GM12878 (cell line): ENCODE measurements at regions of chr2 and their contacts with region 1.

Region 1: GRCh38 chr2:205885492-205886099 is 200.4 kb downstream of the INO80D start:
- DNase-seq: no peak
- ATAC-seq: peak; percentile 89
- H3K4me3 ChIP-seq: no peak overlapping the region
- H3K27ac ChIP-seq: no peak overlapping the region
- H3K4me1 ChIP-seq: no peaks in the 10 kb centered on the region
- H3K27me3 ChIP-seq: no peaks in the 10 kb centered on the region
- CTCF ChIP-seq: peak; percentile 82 to 86 (median 85)
- EP300 ChIP-seq: no peak
- POLR2A ChIP-seq: no peak
- RAD21 ChIP-seq: peak; percentile 87

Region 2: DNA sequence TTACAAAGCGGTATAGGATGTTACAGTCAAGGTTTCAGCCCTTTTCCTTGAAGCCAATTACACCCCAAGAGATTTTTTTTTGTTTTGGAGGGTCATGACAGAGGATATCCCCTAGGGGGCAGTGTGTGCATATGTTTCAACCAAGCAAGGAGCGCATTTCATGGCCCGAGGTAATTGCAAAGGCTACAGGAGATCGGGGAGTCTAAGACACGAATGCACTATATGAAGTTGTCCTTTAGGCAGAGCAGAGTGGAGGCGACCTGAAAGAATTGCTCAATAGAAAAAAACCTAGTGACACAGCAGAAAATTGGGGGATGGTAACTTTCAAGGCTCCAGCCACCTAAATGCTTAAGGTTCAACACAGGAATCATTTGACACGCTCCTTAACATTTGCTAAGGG is 1560.1 kb before region 1 on chr2:
- CTCF ChIA-PET with region 1: no interaction called
- POLR2A ChIA-PET with region 1: no interaction called
- RAD21 ChIA-PET with region 1: no interaction called
- SMC1A ChIA-PET with region 1: no interaction called
- in situ Hi-C with region 1: no loop called
- intact Hi-C with region 1: loop called (anchors 5 kb)
- DNase-seq: no peak
- ATAC-seq: peak; percentile 87
- H3K4me3 ChIP-seq: no peak overlapping the region
- H3K27ac ChIP-seq: no peak overlapping the region
- H3K4me1 ChIP-seq: no peaks in the 10 kb centered on the region
- H3K27me3 ChIP-seq: no peaks in the 10 kb centered on the region
- CTCF ChIP-seq: peak; percentile 72 to 83 (median 72)
- EP300 ChIP-seq: no peak
- POLR2A ChIP-seq: no peak
- RAD21 ChIP-seq: peak; percentile 90

Region 3: GRCh38 chr2:205766779-205767359 is 118.7 kb before region 1 on chr2:
- CTCF ChIA-PET with region 1: interaction called, 6 read pairs
- POLR2A ChIA-PET with region 1: no interaction called
- RAD21 ChIA-PET with region 1: no interaction called
- SMC1A ChIA-PET with region 1: no interaction called
- in situ Hi-C with region 1: loop called (anchors 10 kb)
- intact Hi-C with region 1: loop called (anchors 1 kb)
- DNase-seq: no peak
- ATAC-seq: peak; percentile 60
- H3K4me3 ChIP-seq: no peak overlapping the region
- H3K27ac ChIP-seq: no peak overlapping the region
- H3K4me1 ChIP-seq: no peaks in the 10 kb centered on the region
- H3K27me3 ChIP-seq: peaks cover 0 to 2% of the 10 kb centered on the region in 2 experiments; a peak in 1 of 4 replicates
- CTCF ChIP-seq: peak; percentile 77 to 89 (median 79)
- EP300 ChIP-seq: no peak
- POLR2A ChIP-seq: no peak
- RAD21 ChIP-seq: peak; percentile 67

Region 4: DNA sequence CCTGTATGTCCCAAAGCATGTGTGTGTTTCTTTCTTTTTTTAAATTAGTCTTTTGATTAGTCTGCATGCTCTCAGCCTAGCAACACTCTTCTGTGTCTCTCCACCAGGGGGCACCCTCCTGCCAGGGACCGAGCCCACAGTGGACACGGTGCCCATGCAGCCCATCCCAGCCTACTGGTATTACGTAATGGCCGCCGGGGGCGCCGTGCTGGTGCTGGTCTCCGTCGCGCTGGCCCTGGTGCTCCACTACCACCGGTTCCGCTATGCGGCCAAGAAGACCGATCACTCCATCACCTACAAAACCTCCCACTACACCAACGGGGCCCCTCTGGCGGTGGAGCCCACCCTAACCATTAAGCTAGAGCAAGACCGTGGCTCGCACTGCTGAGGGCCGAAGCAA is 109.5 kb before region 1 on chr2:
- CTCF ChIA-PET with region 1: interaction called, 9 read pairs
- POLR2A ChIA-PET with region 1: no interaction called
- RAD21 ChIA-PET with region 1: interaction called, 24 read pairs
- SMC1A ChIA-PET with region 1: interaction called, 4 read pairs
- in situ Hi-C with region 1: loop called (anchors 10 kb)
- intact Hi-C with region 1: loop called (anchors 2 kb)
- DNase-seq: no peak
- ATAC-seq: peak; percentile 93
- H3K4me3 ChIP-seq: no peak overlapping the region
- H3K27ac ChIP-seq: no peak overlapping the region
- H3K4me1 ChIP-seq: no peaks in the 10 kb centered on the region
- H3K27me3 ChIP-seq: no peaks in the 10 kb centered on the region
- CTCF ChIP-seq: peak; percentile 56 to 68 (median 64)
- EP300 ChIP-seq: no peak
- POLR2A ChIP-seq: no peak
- RAD21 ChIP-seq: peak; percentile 61